ENCODE measurements at regions of chr2 and their contacts with region 1.

Region 1: GRCh38 chr2:110869472-110870077 is 137.2 kb downstream of the ACOXL start:
- DNase-seq: no peak
- ATAC-seq: no peak
- H3K4me3 ChIP-seq: no peak overlapping the region
- H3K27ac ChIP-seq: no peak overlapping the region
- H3K4me1 ChIP-seq: peaks cover 58% of the 10 kb centered on the region
- H3K27me3 ChIP-seq: no peaks in the 10 kb centered on the region; a peak in 1 of 4 replicates
- CTCF ChIP-seq: no peak
- EP300 ChIP-seq: no peak
- POLR2A ChIP-seq: no peak
- RAD21 ChIP-seq: no peak

Region 2: DNA sequence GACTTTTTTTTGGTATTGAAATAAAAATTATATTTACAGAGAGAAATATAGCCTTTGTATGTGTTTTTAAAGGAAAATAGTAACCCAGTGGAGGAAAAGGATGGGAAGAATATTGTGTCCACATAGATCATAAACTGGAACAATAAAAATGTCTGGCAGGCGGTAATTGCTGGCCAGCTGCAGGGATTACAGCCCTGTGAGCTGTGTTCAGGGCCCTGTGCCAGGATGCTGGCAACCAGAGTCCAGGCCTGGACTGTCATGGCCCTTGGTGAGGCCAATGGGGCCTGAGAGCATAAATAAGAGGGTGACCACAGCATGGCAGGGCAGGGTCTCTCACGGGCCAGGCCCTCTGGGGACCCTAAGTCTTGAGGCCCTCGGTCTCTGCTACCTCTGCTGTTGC is 34.0 kb after region 1 on chr2:
- CTCF ChIA-PET with region 1: no interaction called
- POLR2A ChIA-PET with region 1: no interaction called
- RAD21 ChIA-PET with region 1: no interaction called
- SMC1A ChIA-PET with region 1: no interaction called
- in situ Hi-C with region 1: no loop called
- intact Hi-C with region 1: no loop called
- DNase-seq: no peak
- ATAC-seq: no peak
- H3K4me3 ChIP-seq: no peak overlapping the region
- H3K27ac ChIP-seq: no peak overlapping the region
- H3K4me1 ChIP-seq: no peaks in the 10 kb centered on the region
- H3K27me3 ChIP-seq: peaks cover 0 to 1% of the 10 kb centered on the region in 2 experiments; a peak in 1 of 4 replicates
- CTCF ChIP-seq: no peak
- EP300 ChIP-seq: no peak
- POLR2A ChIP-seq: no peak
- RAD21 ChIP-seq: no peak

Region 3: DNA sequence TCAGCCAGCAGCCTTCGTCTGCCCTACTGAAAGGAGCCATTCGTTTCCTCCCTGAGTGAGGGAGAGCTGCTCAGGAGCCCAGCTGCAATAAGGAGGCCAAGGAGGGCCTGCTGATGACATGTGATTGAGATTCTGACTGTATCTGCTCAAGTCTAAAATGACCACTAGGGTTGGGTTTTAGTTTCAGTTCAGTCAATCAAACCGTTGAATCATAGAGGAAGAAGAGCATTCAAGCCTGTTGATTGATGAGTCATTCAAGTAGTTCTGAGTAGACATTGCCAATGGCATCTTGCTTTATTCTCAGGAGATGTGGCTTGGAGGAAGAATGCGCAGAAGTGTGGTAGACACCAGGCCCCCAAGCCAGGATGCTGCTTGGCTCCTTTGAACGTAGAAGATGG is 231.2 kb after region 1 on chr2:
- CTCF ChIA-PET with region 1: no interaction called
- POLR2A ChIA-PET with region 1: no interaction called
- RAD21 ChIA-PET with region 1: no interaction called
- SMC1A ChIA-PET with region 1: no interaction called
- in situ Hi-C with region 1: no loop called
- intact Hi-C with region 1: loop called (anchors 5 kb)
- DNase-seq: peak; percentile 78
- ATAC-seq: peak; percentile 96
- H3K4me3 ChIP-seq: no peak overlapping the region
- H3K27ac ChIP-seq: no peak overlapping the region
- H3K4me1 ChIP-seq: peaks cover 9% of the 10 kb centered on the region
- H3K27me3 ChIP-seq: no peaks in the 10 kb centered on the region
- CTCF ChIP-seq: peak in 2 of 3 experiments; percentile 11 to 21; a peak in 2 of 6 replicates
- EP300 ChIP-seq: peak; percentile 70 to 75; a peak in 3 of 4 replicates
- POLR2A ChIP-seq: no peak
- RAD21 ChIP-seq: no peak

Region 4: GRCh38 chr2:112317303-112318158 is 1448.0 kb after region 1 on chr2:
- CTCF ChIA-PET with region 1: no interaction called
- POLR2A ChIA-PET with region 1: no interaction called
- RAD21 ChIA-PET with region 1: no interaction called
- SMC1A ChIA-PET with region 1: no interaction called
- in situ Hi-C with region 1: no loop called
- intact Hi-C with region 1: no loop called
- DNase-seq: no peak
- ATAC-seq: no peak
- H3K4me3 ChIP-seq: no peak overlapping the region
- H3K27ac ChIP-seq: no peak overlapping the region
- H3K4me1 ChIP-seq: no peaks in the 10 kb centered on the region
- H3K27me3 ChIP-seq: no peaks in the 10 kb centered on the region
- CTCF ChIP-seq: no peak
- EP300 ChIP-seq: no peak
- POLR2A ChIP-seq: no peak
- RAD21 ChIP-seq: no peak

Measured in GM12878 (cell line).